A673 (cell line): ENCODE measurements at regions of chr12 and their contacts with region 1.

Region 1: DNA sequence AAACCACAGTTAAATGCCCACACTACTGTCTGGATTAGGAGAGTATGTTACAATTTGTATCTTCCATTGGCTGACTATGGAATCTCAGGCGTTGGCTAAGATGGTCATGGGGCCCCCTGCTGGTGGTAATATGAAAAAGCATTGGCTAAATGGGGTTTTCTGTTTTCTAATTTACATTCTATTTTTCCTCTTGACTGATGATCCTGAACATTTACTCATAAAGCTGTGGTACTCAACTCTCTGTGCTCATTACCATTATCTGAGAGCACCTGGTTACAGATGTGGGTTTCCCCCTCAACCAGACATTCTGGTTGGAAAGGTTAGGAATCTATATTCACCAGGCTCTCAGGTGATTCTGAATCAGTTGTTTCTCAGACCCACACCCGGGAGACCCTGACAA is 64.8 kb downstream of the WSCD2 start:
- DNase-seq: peak; percentile 44
- H3K4me3 ChIP-seq: no peak overlapping the region
- H3K27ac ChIP-seq: no peak overlapping the region
- H3K4me1 ChIP-seq: no peaks in the 10 kb centered on the region
- H3K27me3 ChIP-seq: peaks cover 3% of the 10 kb centered on the region
- CTCF ChIP-seq: peak; percentile 85

Region 2: GRCh38 chr12:107992870-107993451 is 201.0 kb before region 1 on chr12:
- CTCF ChIA-PET with region 1: no interaction called
- POLR2A ChIA-PET with region 1: no interaction called
- intact Hi-C with region 1: loop called (anchors 5 kb)
- DNase-seq: peak; percentile 62
- H3K4me3 ChIP-seq: no peak overlapping the region
- H3K27ac ChIP-seq: no peak overlapping the region
- H3K4me1 ChIP-seq: no peaks in the 10 kb centered on the region
- H3K27me3 ChIP-seq: peaks cover 36% of the 10 kb centered on the region
- CTCF ChIP-seq: peak; percentile 51

Region 3: DNA sequence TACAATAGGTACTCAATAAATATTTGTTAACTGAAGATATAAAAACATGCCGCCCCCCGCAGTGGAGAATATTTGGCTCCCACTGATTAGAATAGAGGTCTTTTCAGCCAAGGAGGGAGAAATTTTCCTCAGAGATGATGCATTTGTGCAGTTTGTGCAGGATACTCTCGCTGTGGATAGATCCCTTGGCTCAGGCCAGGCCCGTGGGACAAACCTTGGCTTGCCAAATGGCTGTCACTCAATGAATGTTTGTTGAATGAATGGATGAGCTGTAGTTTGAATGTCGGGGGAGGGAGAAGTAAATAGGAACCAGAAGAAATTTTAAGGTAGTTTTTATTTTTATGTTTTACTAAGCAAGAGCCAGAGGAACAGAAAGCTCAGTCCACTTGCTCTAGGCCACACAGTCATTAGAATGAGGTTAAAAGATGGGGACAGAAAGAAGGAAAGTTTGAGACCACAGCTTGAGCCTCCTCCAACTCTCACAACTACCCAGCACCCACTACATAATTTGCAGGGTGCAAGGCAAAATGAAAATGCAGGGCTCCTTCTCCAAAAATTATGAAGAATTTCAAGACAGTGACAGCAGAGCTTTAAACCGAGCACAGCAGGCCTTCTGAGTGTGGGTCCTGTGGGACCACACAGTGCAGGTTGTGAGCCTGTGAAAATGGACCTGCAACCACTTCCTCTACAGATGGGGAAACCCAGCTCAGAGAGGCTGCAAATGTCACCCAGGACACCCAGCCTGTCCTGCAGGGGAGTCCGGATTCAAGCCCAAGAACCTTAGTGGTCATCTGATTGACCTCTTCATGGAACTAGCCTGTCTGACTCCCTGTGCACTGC is 13.4 kb before region 1 on chr12:
- CTCF ChIA-PET with region 1: no interaction called
- POLR2A ChIA-PET with region 1: no interaction called
- intact Hi-C with region 1: no loop called
- DNase-seq: no peak
- H3K4me3 ChIP-seq: no peak overlapping the region
- H3K27ac ChIP-seq: no peak overlapping the region
- H3K4me1 ChIP-seq: no peaks in the 10 kb centered on the region
- H3K27me3 ChIP-seq: peaks cover 27% of the 10 kb centered on the region
- CTCF ChIP-seq: no peak